Right ventricle myocardium inferior (tissue), 1 donor: ENCODE measurements at regions of chr10 and their contacts with region 1.

Region 1: DNA sequence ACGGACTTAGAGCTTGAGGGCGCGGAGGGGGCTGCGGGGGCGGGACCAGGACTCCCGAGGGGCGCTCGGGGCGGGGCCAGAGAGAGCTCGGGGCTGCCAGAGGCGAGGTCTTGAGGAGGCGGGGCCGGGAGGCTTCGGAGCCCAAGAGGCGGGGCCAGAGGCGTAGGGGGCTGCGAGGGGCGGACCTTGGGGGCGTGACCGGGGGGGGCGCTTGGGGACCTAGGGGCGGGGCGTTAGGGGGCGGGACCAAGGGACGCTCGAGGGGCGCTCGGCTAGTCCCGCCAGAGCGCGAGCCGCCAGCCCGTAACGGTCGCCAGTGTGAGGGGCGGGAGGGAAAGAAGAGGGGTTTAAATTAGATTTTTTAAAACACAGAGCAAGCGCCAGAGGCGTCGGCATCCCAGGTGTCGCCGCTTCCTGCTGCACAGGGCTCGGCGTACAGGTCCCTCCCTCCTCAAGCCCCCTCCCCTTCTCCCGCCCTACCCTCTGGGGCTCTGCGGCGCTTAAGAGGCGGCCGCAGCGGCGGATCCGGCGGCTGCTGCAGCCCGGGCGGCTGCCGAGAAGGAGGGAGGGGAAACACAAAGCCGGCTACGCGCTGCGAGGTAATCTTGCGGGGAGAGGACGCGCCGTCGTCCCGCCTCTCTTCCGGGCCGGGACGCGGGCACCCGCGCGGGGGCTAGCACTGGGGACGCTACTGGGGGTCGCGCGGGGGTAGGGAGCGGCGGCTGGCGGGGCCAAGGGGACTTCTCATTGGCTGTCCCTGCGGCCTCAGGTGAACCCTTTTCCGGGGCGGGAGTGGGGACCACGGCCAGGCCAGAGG is at the start of gene ADD3:
- DNase-seq: peak; percentile 97
- ATAC-seq: peak; percentile 92
- total RNA-seq, gene ADD3: 121 TPM

Region 2: DNA sequence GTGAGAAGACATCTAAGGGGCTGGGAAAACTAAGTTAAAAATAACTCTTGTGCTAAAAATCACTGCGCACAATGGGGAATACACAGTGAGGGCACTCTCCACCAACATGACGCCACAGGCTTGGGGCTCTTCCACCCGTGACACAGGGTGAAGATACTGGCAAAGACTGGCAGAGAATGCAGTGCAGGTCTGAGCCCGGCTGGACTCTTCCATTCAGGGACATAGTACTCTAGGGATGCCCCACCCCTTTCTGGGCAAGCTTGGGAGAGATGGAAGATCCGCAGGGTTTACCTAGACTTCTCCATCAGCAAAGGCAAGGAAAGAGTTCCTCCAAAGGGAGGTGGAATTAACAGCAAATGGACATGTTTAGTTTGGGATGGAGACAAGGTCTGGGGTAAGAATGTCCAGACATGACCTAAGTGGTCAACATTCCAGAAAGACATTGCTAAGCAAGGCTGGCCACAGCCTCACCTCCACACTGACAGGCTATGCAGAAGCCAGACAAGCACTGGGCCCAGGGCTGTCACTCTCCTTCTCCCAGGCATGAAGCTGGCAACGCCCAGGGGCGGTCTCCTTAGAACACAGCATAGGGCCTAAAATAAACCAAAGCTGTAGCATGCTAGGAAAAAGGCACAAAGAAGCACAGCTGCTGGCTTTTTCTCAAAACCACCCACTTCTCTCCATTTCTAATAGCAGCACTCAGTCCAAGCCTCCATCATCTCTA is 112.7 kb before region 1 on chr10:
- intact Hi-C with region 1: loop called (anchors 2 kb)
- DNase-seq: peak; percentile 87
- ATAC-seq: peak; percentile 64

Region 3: GRCh38 chr10:109966961-109967738 is 40.8 kb before region 1 on chr10:
- intact Hi-C with region 1: loop called (anchors 5 kb)
- DNase-seq: no peak
- ATAC-seq: no peak

Region 4: DNA sequence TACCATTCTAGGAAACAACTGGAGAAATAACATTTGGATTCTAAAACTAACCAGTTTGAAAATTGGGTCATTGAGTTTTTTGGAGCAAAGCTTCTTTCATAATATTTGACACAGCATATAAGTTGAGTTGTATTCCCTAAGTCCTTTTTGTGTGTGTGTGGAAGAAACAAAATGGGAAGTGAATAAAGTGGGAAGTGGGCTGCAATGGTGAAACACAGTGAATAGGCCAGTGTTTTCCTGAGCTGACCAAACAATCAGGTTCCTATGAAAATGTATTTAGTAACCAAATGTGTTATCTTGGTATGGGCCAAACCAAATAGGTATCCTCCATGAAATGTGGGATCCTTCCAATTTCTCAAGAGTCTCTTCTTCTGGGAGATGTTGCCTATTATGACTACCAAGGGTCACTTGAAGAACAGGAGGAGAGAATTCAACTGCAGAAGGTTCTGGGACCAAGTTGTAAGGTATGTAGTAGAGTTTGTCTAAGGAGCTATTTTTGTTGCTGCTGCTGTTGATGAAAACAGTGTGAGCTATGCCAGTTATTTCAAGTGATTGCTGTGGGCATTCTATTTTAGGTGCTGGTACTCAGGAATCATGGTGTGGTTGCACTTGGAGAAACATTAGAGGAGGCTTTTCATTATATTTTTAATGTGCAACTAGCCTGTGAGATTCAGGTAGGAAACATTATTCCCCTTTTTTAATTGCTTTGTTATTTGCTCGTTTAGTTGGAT is 111.1 kb after region 1 on chr10:
- intact Hi-C with region 1: loop called (anchors 5 kb)
- DNase-seq: no peak
- ATAC-seq: peak; percentile 83

Region 5: GRCh38 chr10:110225756-110226542 is 218.0 kb after region 1 on chr10:
- intact Hi-C with region 1: loop called (anchors 5 kb)
- DNase-seq: peak; percentile 96
- ATAC-seq: peak; percentile 73